Posterior vena cava (tissue), 2 donors: ENCODE measurements at regions of chr19 and their contacts with region 1.

Region 1: DNA sequence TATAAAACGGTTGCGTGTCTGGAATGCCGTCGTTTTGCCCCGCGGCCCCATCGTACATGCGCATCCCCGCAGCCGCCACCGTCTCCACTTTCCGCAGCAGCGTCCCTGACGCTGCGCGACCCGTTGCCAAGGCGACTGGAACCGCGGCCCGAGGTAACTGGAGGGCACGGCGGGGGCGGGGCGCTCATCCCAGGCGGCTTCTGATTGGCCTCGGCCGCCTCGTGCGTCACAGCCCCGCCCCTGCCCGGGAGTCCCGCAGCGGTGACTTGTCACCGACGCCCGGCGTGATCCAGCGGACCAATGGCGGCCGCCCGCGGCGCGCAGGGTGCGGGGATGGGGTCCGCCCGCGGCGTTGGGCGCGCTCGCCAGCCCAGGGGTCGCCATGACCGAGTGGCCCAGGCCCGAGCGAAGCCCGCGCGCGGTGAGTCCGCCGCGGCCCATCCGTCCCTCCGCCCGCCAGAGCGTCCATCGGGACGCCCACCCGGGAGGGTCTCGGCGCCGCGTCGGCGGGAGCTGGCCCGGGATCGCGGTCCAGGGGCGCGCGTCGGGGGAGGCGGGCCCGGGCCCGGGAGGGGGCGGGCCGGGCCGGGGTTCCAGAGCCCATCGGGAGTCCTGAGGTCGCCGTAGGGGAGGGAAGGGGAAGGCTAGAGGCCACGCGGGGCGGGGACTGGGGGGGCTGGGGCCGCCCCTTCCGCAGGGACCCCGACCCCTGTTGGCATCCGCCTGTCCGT is at the start of gene ZSCAN1:
- DNase-seq: peak; percentile 89
- total RNA-seq, gene ZSCAN1: not detected

Region 2: DNA sequence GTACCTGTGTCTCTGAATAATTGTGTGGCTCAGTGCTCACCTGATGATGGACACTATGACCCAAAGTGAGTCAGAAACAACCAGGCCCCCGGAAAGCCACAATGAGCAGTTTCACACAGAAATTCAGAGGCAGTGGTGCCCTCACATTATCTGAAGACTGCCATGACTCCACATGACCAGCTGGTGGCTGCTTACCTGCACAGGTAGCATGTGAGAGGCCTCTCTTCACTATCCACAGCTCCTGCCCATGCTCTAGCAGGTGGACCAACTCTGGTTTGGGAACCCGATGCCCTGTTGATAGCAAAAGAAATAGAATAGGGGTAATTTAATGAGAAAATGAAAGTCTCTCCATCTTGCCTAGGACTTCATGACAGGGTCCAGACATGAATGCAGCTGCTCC is 481.5 kb before region 1 on chr19:
- intact Hi-C with region 1: no loop called
- DNase-seq: no peak

Region 3: GRCh38 chr19:57771417-57771816 is 262.5 kb before region 1 on chr19:
- intact Hi-C with region 1: no loop called
- DNase-seq: no peak

Region 4: DNA sequence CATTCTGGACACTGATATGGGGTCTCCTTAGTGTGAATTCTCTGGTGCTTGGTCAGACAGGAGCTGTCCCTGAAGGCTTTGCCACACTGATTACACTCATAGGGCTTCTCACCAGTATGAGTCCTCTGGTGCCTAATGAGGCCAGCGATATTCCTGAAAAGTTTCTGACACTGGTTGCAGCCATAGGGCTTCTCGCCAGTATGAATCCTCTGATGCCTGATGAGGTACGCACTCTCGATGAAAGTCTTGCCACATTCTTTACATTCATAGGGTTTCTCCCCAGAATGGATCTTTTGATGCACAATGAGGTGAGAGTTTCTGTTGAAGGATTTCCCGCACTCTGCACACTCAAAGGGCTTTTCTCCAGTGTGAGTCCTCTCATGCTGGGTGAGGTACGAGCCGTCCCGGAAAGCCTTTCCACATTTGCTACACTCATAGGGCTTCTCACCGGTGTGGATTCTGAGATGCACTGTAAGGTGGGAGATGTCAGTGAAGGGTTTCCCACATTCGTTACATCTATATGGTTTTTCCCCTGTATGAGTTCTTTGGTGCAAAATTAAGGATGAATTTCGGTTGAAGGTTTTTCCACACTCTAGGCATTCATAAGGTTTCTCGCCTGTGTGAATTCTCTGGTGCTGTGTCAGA is 94.3 kb after region 1 on chr19:
- intact Hi-C with region 1: loop called in 1 of 2 experiments (anchors 10 kb)
- DNase-seq: no peak

Region 5: DNA sequence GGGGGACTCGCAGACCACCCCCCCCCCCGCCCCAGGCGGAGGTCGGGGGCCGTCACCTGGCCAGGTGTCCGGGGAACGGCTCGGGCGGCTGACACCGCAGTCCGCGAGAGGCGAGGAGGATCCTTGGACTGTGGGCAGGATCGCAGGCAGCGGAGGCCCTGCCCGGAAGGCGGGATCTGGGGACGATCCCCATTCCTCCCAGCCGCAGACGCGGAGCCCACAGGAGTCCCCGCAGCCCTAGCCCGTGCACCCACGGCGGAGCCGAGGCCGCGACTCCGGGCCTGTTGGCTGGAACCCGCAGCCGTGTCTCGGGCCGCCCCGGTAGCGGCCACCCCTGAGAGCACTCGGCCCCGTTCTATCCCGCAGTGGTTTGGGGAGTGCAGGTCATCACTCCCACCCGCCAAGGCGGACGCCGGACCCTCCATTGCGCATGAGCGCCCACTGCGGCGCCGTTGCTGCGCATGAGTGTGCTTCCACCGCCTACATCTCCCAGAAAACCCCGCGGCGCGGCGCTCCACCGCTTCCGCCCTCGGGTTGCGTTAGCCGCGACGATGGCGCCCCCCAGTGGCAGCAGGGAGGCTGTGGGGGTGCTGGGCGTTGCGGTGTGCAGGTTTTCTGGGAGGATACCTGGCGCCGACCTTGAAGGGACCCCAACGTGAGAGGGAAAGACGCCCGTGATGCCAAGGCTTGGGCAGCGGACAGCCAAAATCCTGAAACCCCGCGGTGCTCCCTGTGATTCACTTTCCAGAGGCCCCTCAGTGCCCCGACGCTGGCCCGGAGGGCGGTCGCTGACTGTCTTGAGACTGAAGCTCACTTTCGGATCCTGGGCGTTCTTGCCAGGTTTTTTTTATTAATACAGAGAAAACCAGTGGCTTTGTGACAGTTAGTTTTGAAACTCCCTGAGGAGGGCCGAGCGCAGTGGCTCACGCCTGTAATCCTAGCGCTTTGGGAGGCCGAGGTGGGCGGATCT is 121.1 kb after region 1 on chr19:
- intact Hi-C with region 1: loop called in 1 of 2 experiments (anchors 2 kb)
- DNase-seq: peak; percentile 99